ENCODE measurements at regions of chr14 and their contacts with region 1.

Region 1: DNA sequence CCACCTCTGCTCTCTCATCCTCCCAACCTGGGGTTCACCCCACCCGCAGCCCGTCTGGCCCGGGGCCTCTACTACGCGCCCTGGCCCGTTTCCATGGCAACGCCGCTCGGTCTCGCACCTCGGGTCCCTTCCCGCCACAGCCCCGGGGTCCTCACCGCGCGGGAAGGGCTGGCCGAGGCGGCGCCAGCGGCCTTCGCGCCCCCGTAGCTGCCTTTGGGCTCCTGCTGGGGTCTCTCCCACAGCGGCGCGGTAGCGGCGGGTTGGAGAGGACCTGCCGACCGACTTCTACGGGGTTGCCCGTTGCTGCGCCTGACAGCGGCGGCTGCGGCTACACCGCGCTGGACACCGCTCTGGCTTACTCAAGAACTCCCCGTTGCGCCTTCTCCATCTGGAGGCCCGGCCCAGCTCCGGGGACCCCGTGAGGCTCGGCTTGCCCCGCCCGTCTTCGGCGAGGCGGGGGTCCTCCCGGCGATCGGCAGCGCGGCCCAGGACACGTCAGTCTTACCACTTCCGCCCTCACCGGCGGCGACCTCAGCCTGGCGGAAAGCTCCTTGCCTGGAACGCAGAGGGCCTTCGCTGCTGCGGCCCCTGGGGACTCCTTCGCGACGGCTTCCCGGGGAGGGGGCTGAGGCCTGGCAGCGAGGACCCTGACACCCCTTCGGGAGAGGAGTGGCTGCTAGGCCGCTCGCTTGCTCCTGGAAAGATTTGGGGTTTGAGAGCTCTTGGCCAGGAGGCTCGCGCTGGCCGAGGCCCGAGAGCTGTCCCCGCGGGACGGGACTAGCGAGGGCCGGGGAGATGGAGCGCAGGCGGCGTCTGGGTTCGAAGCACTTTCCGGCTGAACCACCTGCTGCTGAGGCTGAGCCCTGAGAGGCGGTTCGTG is at the start of gene TM9SF1:
- DNase-seq: peak; percentile 94
- H3K4me3 ChIP-seq: peak within 1 kb of the TSS; percentile 66 to 91 (median 84)
- H3K27ac ChIP-seq: peak within 1 kb of the TSS; percentile 86 to 98 (median 96)
- H3K4me1 ChIP-seq: peaks cover 0 to 31% (median 26%) of the 10 kb centered on the region in 4 donors
- H3K27me3 ChIP-seq: no peaks in the 10 kb centered on the region
- CTCF ChIP-seq: no peak
- EP300 ChIP-seq: no peak
- POLR2A ChIP-seq: peak; percentile 51 to 57
- total RNA-seq, gene TM9SF1: 29.6 to 36.9 (median 34.7) TPM

Region 2: DNA sequence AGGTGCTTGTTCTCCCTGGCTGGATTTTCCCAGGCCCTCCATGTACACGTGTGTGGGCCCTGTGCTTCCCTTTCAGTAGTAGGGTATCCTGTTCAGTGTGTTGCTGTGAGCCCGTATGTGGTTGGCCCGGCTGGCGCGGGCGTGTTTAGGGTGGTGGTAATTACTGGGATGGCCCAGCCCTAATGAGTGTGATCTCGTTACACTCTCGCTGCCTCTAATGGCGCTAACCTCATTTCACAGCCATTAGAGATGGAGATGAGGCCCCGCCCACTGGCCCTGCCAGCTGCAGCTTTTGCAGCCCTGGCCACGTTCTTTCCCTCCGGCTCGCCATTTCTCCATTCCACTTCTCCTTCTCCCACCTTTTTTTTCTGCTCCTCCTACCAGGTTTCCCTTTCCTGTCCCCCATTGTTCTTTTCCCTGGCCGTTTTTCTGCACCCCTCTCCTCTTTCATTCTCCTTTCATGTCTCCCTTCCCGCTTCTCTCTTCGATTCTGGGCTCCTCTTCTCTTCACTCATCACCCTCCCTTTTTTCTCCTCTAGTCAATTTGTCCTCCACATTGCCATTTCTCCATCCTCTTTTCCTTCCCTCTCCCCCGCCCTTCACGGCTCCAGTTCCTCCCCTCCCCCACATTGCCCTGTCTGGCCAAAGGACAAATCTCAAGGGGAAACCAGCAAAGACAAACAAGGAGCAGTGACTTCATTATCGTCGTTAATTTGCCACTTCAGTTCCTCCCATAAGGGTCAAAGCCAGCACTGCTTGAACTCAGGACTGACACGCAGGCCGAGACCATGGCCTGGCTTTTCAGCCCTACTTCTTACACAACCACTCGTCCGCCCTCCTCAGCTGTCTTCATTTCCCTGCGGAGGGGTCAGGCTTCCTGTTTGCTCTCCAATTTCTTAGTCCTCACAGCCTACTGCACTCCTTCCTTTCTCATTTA is 650.7 kb before region 1 on chr14:
- intact Hi-C with region 1: no loop called
- DNase-seq: no peak
- H3K4me3 ChIP-seq: no peak overlapping the region
- H3K27ac ChIP-seq: no peak overlapping the region
- H3K4me1 ChIP-seq: no peaks in the 10 kb centered on the region
- H3K27me3 ChIP-seq: no peaks in the 10 kb centered on the region
- CTCF ChIP-seq: no peak
- EP300 ChIP-seq: no peak
- POLR2A ChIP-seq: no peak

Region 3: DNA sequence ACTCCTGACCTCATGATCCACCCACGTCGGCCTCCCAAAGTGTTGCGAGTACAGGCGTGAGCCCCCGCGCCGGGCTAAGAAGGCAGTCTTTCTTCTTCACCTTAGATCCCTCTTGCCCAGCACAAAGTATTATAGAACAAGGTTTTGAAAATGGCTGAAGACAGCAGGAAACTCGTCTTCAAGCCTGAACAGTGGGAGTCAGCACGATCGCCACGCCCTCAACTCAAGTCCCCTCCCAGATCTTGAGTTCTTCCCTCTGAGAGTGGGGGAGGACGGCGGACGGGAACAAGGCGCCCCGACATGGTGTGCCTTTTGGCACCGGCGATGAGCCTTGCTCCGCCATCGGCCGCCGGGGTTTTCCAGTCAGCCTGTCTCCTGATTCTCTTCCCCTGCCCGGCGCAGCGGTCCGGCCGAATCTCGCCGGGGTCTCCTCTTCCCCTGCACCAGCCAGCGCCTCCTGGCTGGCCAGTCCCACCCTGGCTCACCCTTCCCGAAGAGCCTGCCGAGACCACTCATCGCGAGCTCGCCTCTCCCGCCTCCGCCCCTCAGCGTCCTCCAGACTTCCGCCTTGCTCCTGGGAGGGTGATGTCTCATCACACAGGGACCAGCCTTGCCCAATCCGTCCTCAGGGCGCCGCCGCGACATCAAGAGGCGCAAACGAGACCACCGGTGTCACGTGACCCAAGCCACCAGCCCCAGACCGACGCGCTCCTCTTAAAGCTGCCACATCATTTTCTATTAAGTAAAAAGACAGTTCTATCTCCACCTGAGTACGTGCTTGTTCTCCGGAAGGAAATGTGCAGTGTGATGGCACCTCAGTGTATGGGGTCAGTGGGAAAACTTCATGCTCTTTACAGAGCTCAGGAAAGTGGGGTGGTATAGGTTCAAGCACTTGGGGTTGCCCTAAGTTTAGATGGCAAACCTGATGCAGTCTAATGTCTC is 17.8 kb after region 1 on chr14 and contains the start of gene CHMP4A:
- intact Hi-C with region 1: loop called (anchors 2 kb)
- DNase-seq: peak; percentile 99
- H3K4me3 ChIP-seq: peak within 1 kb of the TSS; percentile 58 to 73 (median 69)
- H3K27ac ChIP-seq: peak within 1 kb of the TSS; percentile 91 to 97 (median 92)
- H3K4me1 ChIP-seq: peaks cover 0 to 45% (median 34%) of the 10 kb centered on the region in 4 donors
- H3K27me3 ChIP-seq: no peaks in the 10 kb centered on the region
- CTCF ChIP-seq: no peak
- EP300 ChIP-seq: no peak
- POLR2A ChIP-seq: peak; percentile 94 to 97
- total RNA-seq, gene CHMP4A: 65.6 to 149 (median 102) TPM

Region 4: DNA sequence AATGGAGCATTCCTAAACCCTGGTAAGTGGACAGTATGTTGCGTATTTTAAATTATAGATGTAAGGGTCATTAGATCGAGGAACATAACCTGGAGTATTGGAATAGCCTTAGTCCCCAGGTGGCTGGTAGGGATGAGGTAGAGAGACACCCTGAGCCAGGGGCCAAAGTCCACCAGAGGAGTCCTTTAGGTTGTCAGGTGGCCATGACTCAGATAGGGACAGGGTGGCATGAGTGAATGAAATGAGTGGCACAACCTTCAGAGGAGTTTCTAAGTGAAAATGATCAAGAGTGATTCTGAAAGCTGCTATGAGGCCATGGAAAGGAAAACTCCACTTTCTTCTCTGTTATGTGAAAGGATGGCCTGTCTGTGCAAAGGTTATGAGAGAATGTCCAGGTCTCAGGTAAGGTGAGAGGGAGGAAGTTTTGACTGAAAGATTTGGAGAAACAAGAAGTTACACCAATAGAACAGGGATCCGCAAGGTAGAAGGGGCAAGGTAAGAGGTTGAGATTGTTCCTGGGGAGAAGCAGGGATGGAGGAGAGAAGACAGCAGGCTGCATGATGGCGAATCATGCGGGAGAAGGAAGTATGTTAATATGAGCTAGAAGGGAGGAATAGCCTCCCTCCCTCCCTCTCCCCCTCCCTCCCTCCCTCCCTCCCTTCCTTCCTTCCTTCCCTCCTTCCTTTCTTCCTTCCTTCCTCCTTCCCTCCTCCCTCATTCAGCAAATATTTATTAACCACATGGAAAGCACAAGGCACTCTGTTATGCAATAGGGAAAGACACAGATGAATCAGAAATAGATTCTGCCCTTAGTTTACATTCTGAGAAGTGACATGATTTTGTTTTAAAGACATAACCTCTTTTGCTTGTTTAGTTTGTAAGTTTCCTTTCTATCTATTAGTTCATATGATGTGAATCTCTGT is 158.4 kb after region 1 on chr14:
- intact Hi-C with region 1: no loop called
- DNase-seq: no peak
- H3K4me3 ChIP-seq: no peak overlapping the region
- H3K27ac ChIP-seq: peak overlapping the region in 2 of 4 donors; percentile 3 to 49
- H3K4me1 ChIP-seq: peaks cover 0 to 7% (median 3%) of the 10 kb centered on the region in 4 donors
- H3K27me3 ChIP-seq: no peaks in the 10 kb centered on the region
- CTCF ChIP-seq: no peak
- EP300 ChIP-seq: no peak
- POLR2A ChIP-seq: no peak